ENCODE measurements at regions of chr13 and their contacts with region 1.

Region 1: DNA sequence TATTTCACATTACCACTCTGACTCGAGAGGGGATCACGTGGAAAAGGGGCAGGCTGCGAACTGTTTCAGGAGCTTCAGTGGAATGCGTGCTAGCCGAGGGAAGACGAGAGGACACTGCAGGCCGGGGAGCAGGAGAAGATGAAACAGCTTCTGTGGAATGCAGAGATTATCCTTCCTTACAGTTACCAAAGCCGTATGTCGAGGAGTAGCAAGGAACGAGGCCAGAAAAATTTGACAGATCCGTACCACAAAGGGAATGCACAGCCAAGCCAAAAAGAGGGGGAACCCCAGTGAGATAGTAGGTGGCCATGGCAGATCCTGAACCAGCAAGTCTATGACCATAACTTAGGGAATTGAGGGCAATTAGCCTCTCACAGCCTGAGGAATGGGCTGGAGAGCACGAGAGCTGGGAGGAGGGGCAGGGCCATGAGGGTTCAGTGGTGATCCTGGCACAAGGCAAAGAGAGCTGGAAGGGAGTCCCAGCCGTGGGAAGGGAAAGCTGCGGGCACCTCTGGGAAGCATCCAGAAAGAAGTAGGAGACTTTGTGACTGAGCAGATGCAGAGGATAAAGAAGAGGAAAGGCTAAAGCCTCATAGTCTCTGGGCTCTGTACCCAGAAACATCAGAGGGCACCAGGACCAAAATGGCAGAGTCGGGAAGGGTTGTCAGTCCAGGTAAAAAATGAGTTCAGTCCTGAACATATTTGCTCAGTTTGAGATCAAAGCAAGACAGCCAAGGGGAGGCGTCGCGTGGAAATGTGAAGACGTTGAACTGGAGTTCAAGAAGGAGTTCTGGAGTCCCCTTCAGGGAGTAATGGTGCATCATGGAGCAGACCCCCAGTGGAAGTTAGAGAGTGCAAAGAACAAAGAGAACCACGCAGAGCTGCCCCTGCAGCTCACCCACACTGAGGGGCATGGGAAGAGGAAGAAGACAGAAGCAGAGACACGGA is 5.1 kb downstream of the COL4A1 start:
- DNase-seq: peak; percentile 90
- ATAC-seq: peak; percentile 72
- H3K4me3 ChIP-seq: no peak overlapping the region
- H3K27ac ChIP-seq: peak overlapping the region; percentile 72
- H3K4me1 ChIP-seq: peaks cover 34% of the 10 kb centered on the region
- H3K27me3 ChIP-seq: no peaks in the 10 kb centered on the region
- CTCF ChIP-seq: no peak
- POLR2A ChIP-seq: peak; percentile 15
- RAD21 ChIP-seq: no peak

Region 2: GRCh38 chr13:110225609-110226562 is 76.0 kb before region 1 on chr13:
- CTCF ChIA-PET with region 1: interaction called, 3 read pairs
- POLR2A ChIA-PET with region 1: no interaction called
- dilution Hi-C with region 1: no loop called
- in situ Hi-C with region 1: no loop called
- intact Hi-C with region 1: loop called (anchors 1 kb)
- DNase-seq: peak; percentile 64
- ATAC-seq: peak; percentile 24
- H3K4me3 ChIP-seq: no peak overlapping the region
- H3K27ac ChIP-seq: peak overlapping the region; percentile 45; the same call in 1 of the 2 replicates
- H3K4me1 ChIP-seq: peaks cover 28% of the 10 kb centered on the region
- H3K27me3 ChIP-seq: no peaks in the 10 kb centered on the region
- CTCF ChIP-seq: no peak
- POLR2A ChIP-seq: no peak
- RAD21 ChIP-seq: no peak